CD14-positive monocyte (primary cell): ENCODE measurements at regions of chr9 and their contacts with region 1.

Region 1: GRCh38 chr9:97830884-97831829 is 21.9 kb upstream of the FOXE1 start:
- DNase-seq: no peak
- H3K4me3 ChIP-seq: no peak overlapping the region
- H3K4me3 Mint-ChIP-seq: peak overlapping the region in 1 of 2 donors; percentile 78
- H3K27ac ChIP-seq: no peak overlapping the region
- H3K27ac Mint-ChIP-seq: peak overlapping the region in 3 of 7 donors; percentile 13 to 22 (median 19)
- H3K4me1 ChIP-seq: peaks cover 16 to 17% of the 10 kb centered on the region in 2 donors
- H3K4me1 Mint-ChIP-seq: peaks cover 17% of the 10 kb centered on the region
- H3K27me3 ChIP-seq: peaks cover 31 to 58% of the 10 kb centered on the region in 2 donors
- H3K27me3 Mint-ChIP-seq: peaks cover 35 to 59% (median 54%) of the 10 kb centered on the region in 3 donors
- CTCF ChIP-seq: no peak

Region 2: DNA sequence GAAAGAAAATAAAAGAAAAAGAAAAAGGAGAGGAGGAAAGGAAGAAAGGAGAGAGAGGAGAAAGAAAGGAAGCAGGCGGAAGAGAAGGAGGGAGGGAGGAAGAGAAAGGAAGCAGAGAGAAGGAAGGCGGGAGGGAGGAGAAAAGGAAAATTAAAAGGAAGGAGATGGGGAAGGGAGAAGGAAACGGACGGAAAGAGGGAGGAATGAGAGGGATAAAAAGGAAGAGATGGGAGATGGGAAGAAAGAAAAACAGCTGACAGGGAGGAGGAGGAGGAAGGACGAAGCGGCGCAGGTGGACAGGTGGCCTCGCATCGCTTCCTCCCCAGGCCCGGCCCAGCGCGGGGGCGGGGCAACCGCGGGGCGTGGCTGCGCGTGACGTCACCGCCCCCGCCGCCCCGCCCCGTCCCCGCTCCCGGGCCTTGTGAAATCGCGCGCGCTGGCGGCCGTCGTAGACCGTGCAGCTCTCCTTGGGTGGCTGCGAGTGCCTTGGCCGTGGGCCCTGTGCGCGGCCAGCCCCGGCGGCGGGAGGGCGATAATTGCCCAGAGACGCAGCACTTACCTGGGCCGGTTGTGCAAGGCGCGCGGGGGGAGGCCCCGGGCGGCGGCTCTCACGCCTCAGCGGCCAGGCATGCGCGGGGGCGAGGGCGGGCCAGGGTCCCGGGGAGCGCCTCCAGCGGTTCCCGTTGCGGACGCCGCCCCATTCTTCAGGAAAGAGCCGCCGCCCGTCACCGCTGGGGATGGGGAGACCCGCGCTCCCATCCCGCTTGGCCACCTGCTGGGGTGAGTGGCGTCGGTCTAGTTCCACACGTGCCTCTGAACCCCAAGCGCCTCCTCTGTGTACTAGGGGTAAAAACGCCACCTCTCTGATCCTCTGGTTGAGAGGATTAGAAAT is 27.7 kb before region 1 on chr9:
- intact Hi-C with region 1: no loop called
- DNase-seq: peak; percentile 47 to 70 (median 49)
- H3K4me3 ChIP-seq: peak overlapping the region; percentile 16 to 66 (median 28)
- H3K4me3 Mint-ChIP-seq: peak overlapping the region; percentile 69 to 89
- H3K27ac ChIP-seq: no peak overlapping the region
- H3K27ac Mint-ChIP-seq: peak overlapping the region in 4 of 7 donors; percentile 29 to 61 (median 50)
- H3K4me1 ChIP-seq: peaks cover 10 to 11% of the 10 kb centered on the region in 2 donors
- H3K4me1 Mint-ChIP-seq: peaks cover 14% of the 10 kb centered on the region
- H3K27me3 ChIP-seq: peaks cover 33 to 60% of the 10 kb centered on the region in 2 donors
- H3K27me3 Mint-ChIP-seq: peaks cover 35 to 61% (median 50%) of the 10 kb centered on the region in 3 donors
- CTCF ChIP-seq: no peak

Region 3: GRCh38 chr9:97873877-97874276 is 42.7 kb after region 1 on chr9:
- intact Hi-C with region 1: loop called in 1 of 2 experiments (anchors 5 kb)
- DNase-seq: peak in 1 of 3 donors; percentile 23
- H3K4me3 ChIP-seq: no peak overlapping the region
- H3K4me3 Mint-ChIP-seq: no peak overlapping the region
- H3K27ac ChIP-seq: no peak overlapping the region
- H3K27ac Mint-ChIP-seq: no peak overlapping the region
- H3K4me1 ChIP-seq: peaks cover 16 to 17% of the 10 kb centered on the region in 2 donors
- H3K4me1 Mint-ChIP-seq: peaks cover 17% of the 10 kb centered on the region
- H3K27me3 ChIP-seq: peaks cover 4 to 21% of the 10 kb centered on the region in 2 donors
- H3K27me3 Mint-ChIP-seq: peaks cover 18 to 41% (median 22%) of the 10 kb centered on the region in 3 donors
- CTCF ChIP-seq: no peak

Region 4: DNA sequence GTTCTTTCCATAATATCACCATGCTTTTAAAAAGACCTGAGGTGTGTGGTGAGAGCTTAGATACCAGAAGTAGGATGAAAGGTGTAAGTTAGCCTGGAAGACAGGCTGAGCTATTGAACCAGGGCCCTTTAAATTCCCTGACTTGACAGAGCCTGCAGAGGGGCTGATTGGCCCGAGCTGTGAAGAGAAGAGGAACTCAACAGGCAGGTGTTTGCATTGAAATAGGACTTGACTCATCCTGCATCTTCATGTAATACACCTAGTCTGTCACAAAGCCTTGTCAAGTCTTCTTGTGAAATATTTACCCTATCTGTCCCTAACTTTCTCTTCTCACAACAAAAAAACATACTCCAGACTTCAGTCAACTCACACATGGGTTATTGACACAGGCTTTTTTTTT is 135.3 kb after region 1 on chr9:
- intact Hi-C with region 1: no loop called
- DNase-seq: no peak
- H3K4me3 ChIP-seq: no peak overlapping the region
- H3K4me3 Mint-ChIP-seq: no peak overlapping the region
- H3K27ac ChIP-seq: no peak overlapping the region
- H3K27ac Mint-ChIP-seq: no peak overlapping the region
- H3K4me1 ChIP-seq: no peaks in the 10 kb centered on the region
- H3K4me1 Mint-ChIP-seq: no peaks in the 10 kb centered on the region
- H3K27me3 ChIP-seq: no peaks in the 10 kb centered on the region
- H3K27me3 Mint-ChIP-seq: peaks cover 0 to 3% (median 2%) of the 10 kb centered on the region in 3 donors
- CTCF ChIP-seq: no peak

Region 5: GRCh38 chr9:99030092-99030511 is 1198.9 kb after region 1 on chr9:
- intact Hi-C with region 1: no loop called
- DNase-seq: peak in 1 of 3 donors; percentile 25
- H3K4me3 ChIP-seq: no peak overlapping the region
- H3K4me3 Mint-ChIP-seq: peak overlapping the region in 1 of 2 donors; percentile 63
- H3K27ac ChIP-seq: no peak overlapping the region
- H3K27ac Mint-ChIP-seq: peak overlapping the region in 2 of 7 donors; percentile 48 to 61
- H3K4me1 ChIP-seq: peaks cover 33 to 34% of the 10 kb centered on the region in 2 donors
- H3K4me1 Mint-ChIP-seq: peaks cover 44% of the 10 kb centered on the region
- H3K27me3 ChIP-seq: peaks cover 3 to 8% of the 10 kb centered on the region in 2 donors
- H3K27me3 Mint-ChIP-seq: peaks cover 17 to 29% (median 28%) of the 10 kb centered on the region in 3 donors
- CTCF ChIP-seq: no peak